ENCODE measurements at regions of chr6 and their contacts with region 1.

Region 1: DNA sequence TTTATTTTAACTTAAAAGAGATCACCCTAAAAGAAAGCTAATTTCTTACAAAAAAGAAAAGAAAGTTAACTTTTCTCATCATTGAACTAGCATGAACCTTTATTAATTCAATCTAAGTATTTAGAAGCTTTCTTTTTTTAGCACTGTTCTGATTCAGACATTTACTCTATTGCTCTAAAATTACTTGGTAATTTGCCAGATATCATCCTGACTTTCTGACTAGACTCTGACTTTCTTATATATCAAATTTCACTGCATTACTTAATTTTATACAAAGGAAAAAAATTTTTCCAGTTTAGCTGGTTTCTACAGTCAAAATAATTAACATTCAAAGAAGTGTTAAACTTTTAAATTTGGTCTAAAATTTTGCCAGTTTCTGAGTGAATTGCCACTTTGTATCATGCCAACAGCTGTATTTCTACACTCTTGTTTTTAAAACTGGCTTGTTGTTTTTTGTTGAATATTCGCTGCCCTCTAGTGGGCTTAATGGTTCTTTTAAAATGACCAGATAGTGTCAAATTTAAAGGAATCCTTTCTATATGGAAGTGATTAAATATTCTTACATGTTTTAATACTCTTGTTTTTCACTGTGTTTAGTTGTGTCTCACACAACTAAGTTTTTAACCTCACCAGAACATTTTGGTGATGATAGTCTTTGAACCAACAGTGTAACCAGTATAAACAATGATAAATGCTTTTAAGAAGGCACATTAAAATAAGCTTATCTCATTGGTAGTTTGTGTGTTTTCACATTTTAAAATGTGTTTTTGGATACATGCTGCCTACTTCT is 102.0 kb downstream of the POPDC3 start:
- DNase-seq: peak; percentile 31
- H3K4me3 ChIP-seq: no peak overlapping the region
- H3K27ac ChIP-seq: peak overlapping the region; percentile 0 to 64; a peak in 3 of 4 replicates
- H3K4me1 ChIP-seq: peaks cover 0 to 6% of the 10 kb centered on the region in 2 experiments; a peak in 2 of 4 replicates
- H3K27me3 ChIP-seq: no peaks in the 10 kb centered on the region
- CTCF ChIP-seq: peak; percentile 85
- EP300 ChIP-seq: no peak
- RAD21 ChIP-seq: peak; percentile 87

Region 2: GRCh38 chr6:104859225-104860146 is 218.3 kb before region 1 on chr6 and contains the start of gene HACE1:
- CTCF ChIA-PET with region 1: interaction called, 14 read pairs
- POLR2A ChIA-PET with region 1: no interaction called
- DNase-seq: peak; percentile 96
- H3K4me3 ChIP-seq: peak within 1 kb of the TSS; percentile 76 to 96
- H3K27ac ChIP-seq: peak within 1 kb of the TSS; percentile 37 to 81; a peak in 3 of 4 replicates
- H3K4me1 ChIP-seq: peaks cover 0 to 2% of the 10 kb centered on the region in 2 experiments; a peak in 1 of 4 replicates
- H3K27me3 ChIP-seq: no peaks in the 10 kb centered on the region; the same call in 1 of the 2 replicates
- CTCF ChIP-seq: peak; percentile 32
- EP300 ChIP-seq: 0 out of 4 replicates have a peak, but pooled peaks of 1 of the 2 experiments have one; percentile 24
- RAD21 ChIP-seq: no peak
- polyA plus RNA-seq, gene HACE1: 6.2 and 7.1 TPM in 2 replicates

Region 3: DNA sequence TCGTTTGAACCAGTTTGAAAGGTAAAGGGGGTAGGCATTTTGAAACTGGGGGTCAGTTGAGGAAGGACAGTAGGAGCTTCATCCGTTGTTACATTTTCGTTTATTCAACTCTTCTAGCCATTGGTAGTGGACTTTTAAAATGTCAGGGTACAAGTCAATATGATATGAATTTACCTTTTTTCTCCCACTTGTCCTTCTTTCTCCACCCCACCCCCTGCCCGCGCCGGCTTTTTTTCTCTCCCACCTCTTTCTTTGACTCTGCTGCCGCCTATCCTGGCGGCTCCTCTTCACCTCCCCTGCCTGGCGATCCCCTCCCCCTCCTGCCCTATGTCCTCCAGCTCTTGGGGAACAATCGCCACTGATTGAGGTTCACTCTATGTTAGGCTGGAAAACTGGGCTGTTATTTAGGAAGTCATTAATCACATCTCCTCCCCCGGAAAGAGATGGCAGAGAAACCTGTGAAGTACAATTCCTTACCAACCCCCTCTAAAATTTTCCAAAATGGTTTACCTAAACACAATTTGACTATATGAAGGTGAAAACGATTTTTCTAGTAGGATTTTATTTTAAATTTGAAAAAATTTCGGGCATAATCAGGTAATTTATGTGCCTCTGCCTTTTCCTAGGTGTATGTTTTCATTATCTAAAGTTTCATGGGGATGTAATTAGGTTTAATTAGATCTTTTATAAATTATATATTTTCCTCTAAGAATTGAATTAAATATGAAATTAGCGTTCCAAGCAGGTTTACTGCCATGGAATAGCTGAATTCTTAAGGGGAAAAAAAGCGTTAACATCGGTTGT is 121.7 kb before region 1 on chr6:
- CTCF ChIA-PET with region 1: interaction called, 18 read pairs
- POLR2A ChIA-PET with region 1: no interaction called
- DNase-seq: peak; percentile 62
- H3K4me3 ChIP-seq: peak overlapping the region; percentile 12 to 55; a peak in 2 of 4 replicates
- H3K27ac ChIP-seq: peak overlapping the region; percentile 36 to 91; a peak in 3 of 4 replicates
- H3K4me1 ChIP-seq: no peaks in the 10 kb centered on the region; a peak in 1 of 4 replicates
- H3K27me3 ChIP-seq: peaks cover 11% of the 10 kb centered on the region; the same call in 1 of the 2 replicates
- CTCF ChIP-seq: no peak
- EP300 ChIP-seq: no peak
- RAD21 ChIP-seq: peak; percentile 24; the same call in 1 of the 2 replicates

Region 4: DNA sequence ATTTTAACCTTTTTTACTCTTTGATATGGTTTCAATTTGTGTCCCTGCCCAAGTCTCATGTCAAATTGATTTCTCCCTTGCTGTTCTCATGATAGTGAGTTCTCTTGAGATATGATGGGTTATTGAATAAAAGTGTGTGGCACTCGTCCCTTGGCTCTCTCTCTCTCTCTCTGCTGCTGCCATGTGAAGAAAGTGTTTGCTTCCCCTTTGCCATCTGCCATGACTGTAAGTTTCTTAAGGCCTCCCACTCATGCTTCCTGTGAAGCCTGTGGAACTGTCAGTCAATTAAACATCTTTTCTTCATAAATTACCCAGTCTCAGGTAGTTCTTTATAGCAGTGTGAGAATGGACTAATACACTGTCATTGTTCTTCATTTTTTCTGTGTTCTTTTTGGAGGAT is 72.3 kb before region 1 on chr6:
- CTCF ChIA-PET with region 1: interaction called, 17 read pairs
- POLR2A ChIA-PET with region 1: no interaction called
- DNase-seq: no peak
- H3K4me3 ChIP-seq: no peak overlapping the region
- H3K27ac ChIP-seq: no peak overlapping the region
- H3K4me1 ChIP-seq: no peaks in the 10 kb centered on the region; a peak in 1 of 4 replicates
- H3K27me3 ChIP-seq: no peaks in the 10 kb centered on the region
- CTCF ChIP-seq: no peak
- EP300 ChIP-seq: no peak
- RAD21 ChIP-seq: no peak

Region 5: DNA sequence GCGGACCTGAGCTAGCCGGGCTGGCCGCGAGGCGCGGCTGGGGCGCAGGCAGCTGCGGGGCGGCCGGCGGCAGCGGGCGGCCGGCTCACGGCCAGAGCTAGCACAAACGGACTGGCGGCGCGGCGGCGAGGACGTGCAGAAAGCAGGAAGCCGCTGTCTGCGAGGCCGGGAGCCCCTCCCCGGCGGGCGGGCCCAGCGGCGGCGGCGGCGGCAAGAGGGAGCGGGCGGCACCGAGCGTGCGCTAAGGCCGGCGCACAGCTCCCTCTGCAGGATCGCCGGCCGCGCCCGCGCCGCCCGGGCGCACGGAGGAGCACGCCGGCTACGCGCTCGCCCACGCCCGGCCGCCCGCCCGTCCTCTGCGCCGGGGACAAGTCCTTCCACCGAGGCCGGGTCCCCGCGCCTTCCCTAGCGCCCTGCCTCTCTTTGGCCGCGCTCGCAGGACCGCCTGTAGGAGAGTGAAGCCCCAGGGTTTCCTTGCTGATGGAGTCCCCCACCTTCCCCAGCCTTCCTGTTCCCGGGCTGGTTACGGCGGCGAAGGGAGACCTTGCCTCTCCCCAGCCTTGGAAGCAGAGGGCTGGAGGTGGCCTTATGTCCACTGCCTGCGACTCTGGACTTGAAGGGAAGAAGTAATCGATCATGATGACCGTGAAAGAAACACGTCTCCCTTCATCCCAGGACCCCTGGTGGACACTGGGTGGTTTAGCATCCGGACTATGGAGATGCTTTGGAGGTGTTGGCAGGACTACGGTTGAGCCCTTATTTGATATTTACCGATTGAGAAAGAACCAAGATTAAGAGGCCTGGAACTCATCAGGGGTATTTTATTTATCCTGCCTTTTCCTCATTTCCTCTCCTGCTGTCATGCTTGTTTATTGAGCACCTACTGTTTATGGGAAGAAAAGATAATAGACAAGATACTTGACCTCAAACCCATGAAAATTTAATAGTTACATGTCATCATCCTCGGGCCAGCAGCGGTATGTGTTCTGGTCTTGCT is 325.4 kb after region 1 on chr6 and contains the start of gene PREP:
- CTCF ChIA-PET with region 1: interaction called, 11 read pairs
- POLR2A ChIA-PET with region 1: no interaction called
- DNase-seq: peak; percentile 94
- H3K4me3 ChIP-seq: peak within 1 kb of the TSS; percentile 86 to 98
- H3K27ac ChIP-seq: peak within 1 kb of the TSS; percentile 71 to 94
- H3K4me1 ChIP-seq: peaks cover 0 to 22% of the 10 kb centered on the region in 2 experiments; a peak in 2 of 4 replicates
- H3K27me3 ChIP-seq: no peaks in the 10 kb centered on the region
- CTCF ChIP-seq: peak; percentile 89
- EP300 ChIP-seq: no peak
- RAD21 ChIP-seq: peak; percentile 62
- polyA plus RNA-seq, gene PREP: 15.9 and 20.9 TPM in 2 replicates